Activated CD4-positive, alpha-beta T cell treated with anti-CD3 and anti-CD28 coated beads for 36 hours (primary cell): ENCODE measurements at regions of chr2 and their contacts with region 1.

Region 1: GRCh38 chr2:43226558-43226954 is at the start of gene ZFP36L2:
- DNase-seq: peak; percentile 98
- ATAC-seq: peak; percentile 75
- H3K4me3 Mint-ChIP-seq: peak within 1 kb of the TSS; percentile 83
- H3K27ac Mint-ChIP-seq: peak within 1 kb of the TSS; percentile 91
- H3K4me1 Mint-ChIP-seq: peaks cover 37% of the 10 kb centered on the region
- H3K27me3 Mint-ChIP-seq: no peaks in the 10 kb centered on the region
- total RNA-seq, gene ZFP36L2: 74.4 to 77.7 TPM

Region 2: GRCh38 chr2:42810121-42810970 is 416.2 kb before region 1 on chr2:
- CTCF ChIA-PET with region 1: interaction called, 3 read pairs
- POLR2A ChIA-PET with region 1: interaction called, 7 read pairs
- intact Hi-C with region 1: loop called (anchors 1 to 5 kb)
- DNase-seq: peak; percentile 97
- ATAC-seq: peak; percentile 80
- H3K4me3 Mint-ChIP-seq: peak overlapping the region; percentile 94
- H3K27ac Mint-ChIP-seq: peak overlapping the region; percentile 98
- H3K4me1 Mint-ChIP-seq: peaks cover 17% of the 10 kb centered on the region
- H3K27me3 Mint-ChIP-seq: peaks cover 2% of the 10 kb centered on the region

Region 3: GRCh38 chr2:42974721-42975717 is 251.5 kb before region 1 on chr2:
- CTCF ChIA-PET with region 1: interaction called, 10 read pairs
- POLR2A ChIA-PET with region 1: interaction called, 3 read pairs
- intact Hi-C with region 1: loop called (anchors 1 to 2 kb)
- DNase-seq: peak; percentile 67
- ATAC-seq: peak; percentile 43
- H3K4me3 Mint-ChIP-seq: no peak overlapping the region
- H3K27ac Mint-ChIP-seq: no peak overlapping the region
- H3K4me1 Mint-ChIP-seq: peaks cover 13% of the 10 kb centered on the region
- H3K27me3 Mint-ChIP-seq: no peaks in the 10 kb centered on the region

Region 4: DNA sequence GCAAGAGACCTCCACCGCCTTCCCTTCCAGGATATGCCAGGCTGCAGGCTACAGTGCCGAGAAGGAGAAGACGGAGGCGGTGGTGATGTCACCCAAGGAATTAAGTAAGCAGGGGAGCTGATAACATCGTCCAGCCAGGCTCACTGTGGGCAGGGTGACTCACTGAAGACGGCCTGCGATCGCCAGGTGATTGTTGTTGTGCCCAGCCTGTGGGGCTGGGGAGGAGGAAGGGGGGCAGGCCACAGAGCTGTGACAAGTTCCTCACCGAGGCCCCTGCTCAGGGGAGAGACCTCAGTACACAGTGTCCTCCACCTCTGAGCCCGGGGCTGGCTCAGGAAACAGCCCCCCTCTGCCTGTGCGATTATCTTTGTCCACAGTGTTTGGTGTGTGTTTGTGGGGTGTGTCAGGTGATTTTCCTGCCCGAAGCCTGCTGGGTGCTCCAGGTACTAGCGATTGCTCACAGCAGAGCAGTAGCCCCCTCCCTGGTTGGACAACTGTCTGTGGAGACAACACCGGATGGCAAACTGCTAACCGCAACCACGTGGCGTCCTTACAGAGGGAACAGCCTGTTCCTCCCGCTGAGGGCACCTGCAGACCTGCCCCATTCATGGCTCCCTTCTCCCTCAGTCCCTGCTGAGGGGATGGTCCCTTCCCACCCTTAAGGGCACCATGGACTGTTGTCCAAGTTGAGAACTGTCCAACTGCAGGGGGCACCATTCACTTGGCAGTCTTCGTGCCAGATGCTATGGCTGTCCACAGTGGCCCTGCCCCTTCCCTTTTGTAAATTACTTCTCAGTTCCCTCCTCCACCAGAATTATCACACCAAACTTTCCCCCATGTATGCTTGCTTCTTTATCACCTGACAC is 95.3 kb before region 1 on chr2:
- CTCF ChIA-PET with region 1: interaction called, 239 read pairs
- POLR2A ChIA-PET with region 1: interaction called, 8 read pairs
- intact Hi-C with region 1: loop called (anchors 1 kb)
- DNase-seq: peak; percentile 90
- ATAC-seq: peak; percentile 47
- H3K4me3 Mint-ChIP-seq: peak overlapping the region; percentile 8
- H3K27ac Mint-ChIP-seq: peak overlapping the region; percentile 70
- H3K4me1 Mint-ChIP-seq: peaks cover 88% of the 10 kb centered on the region
- H3K27me3 Mint-ChIP-seq: no peaks in the 10 kb centered on the region

Region 5: DNA sequence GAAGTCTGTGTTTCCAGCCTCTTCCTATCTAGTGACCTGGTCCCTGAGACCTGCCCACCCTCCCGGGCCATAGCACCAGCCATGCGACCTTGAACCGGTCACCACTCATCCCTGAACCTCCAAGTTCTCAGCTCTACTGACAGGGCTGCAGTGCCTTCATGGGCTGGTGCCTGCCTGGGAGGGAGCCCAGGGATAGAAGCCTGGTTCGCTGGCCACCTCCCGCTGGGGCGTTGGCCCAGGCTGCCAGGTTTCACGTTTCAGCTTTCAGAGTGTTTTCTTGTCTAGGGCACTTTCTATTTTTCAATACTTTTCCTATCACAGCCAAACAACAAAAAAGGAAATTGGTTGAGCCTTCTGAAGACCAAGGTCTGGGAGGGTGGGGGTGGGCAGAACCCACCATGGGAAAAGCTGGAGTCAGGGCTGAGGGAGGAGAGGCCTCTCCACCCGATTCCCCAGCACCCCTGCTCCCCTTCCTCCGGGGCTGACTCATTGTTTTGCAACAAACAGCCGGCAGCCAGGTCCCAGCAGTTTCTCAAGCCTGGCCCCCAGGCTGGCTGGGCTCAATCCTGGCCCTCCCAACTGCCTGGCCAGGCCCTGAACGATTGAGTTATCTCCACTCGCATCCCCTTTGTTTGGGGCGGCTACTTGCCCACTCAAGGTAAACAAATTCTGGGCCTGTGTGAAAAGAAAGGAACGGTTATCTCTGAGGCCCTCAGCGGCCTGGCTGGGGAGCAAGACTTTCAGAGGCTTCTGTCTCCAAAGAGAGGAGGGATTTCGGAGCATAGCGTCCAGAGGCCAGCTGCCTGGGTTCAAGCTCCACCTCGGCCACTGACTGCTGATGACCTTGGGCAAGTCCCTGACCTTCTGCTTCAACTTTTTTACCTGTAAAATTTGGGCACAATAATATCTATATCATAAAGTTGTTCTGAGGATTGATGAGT is 47.7 kb before region 1 on chr2:
- CTCF ChIA-PET with region 1: interaction called, 16 read pairs
- POLR2A ChIA-PET with region 1: interaction called, 8 read pairs
- intact Hi-C with region 1: loop called (anchors 1 kb)
- DNase-seq: peak; percentile 57
- ATAC-seq: peak; percentile 10
- H3K4me3 Mint-ChIP-seq: peak overlapping the region; percentile 16
- H3K27ac Mint-ChIP-seq: peak overlapping the region; percentile 90
- H3K4me1 Mint-ChIP-seq: peaks cover 69% of the 10 kb centered on the region
- H3K27me3 Mint-ChIP-seq: no peaks in the 10 kb centered on the region

Region 6: DNA sequence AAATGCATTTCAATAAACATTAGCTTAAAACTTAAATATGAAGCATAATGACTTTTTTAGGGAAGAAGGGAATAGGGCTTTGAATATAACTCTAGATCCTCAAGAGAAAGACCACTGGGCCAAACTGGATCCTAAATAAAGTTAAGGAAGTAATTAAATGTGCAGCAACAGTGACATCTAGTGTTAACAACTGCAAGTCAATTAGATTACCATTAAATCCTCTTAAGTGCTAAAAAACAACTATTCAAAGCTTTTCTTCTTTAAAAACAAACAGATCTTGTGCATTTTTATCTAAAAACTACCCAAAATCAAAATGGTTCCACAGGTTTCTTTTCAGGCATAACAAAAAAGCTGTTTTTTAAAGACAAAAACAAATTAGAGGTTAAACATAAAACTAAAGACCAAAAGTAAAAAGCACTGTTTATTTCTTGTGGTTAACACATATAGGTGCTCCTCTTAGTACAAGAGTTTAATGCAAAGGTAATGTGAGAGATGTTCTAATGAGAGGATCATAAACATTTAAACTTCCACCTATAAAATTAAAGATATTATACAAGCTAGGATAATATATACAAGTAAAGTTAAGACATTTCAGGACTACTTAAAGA is 257.9 kb after region 1 on chr2:
- CTCF ChIA-PET with region 1: interaction called, 32 read pairs
- POLR2A ChIA-PET with region 1: no interaction called
- intact Hi-C with region 1: loop called (anchors 1 kb)
- DNase-seq: no peak
- ATAC-seq: peak; percentile 42
- H3K4me3 Mint-ChIP-seq: no peak overlapping the region
- H3K27ac Mint-ChIP-seq: no peak overlapping the region
- H3K4me1 Mint-ChIP-seq: peaks cover 2% of the 10 kb centered on the region
- H3K27me3 Mint-ChIP-seq: no peaks in the 10 kb centered on the region